Activated T-helper 1 cell treated with anti-CD3 and anti-CD28 coated beads, Interleukin-12 subunit alpha, Interleukin-12 subunit beta, Interleukin-2, Interleukin-4 antibody, amounts not matched to agents 30 ng/mL and 10 ng/mL and 1 ng/mL, durations not matched to agents 14 hours and 24 hours and 36 hours (primary cell): ENCODE measurements at regions of chr1 and their contacts with region 1.

Region 1: GRCh38 chr1:34597877-34598514 is 156.9 kb upstream of the GJB5 start:
- DNase-seq: peak; percentile 21
- H3K4me3 Mint-ChIP-seq: no peak overlapping the region
- H3K27ac Mint-ChIP-seq: no peak overlapping the region
- H3K4me1 Mint-ChIP-seq: no peaks in the 10 kb centered on the region
- H3K27me3 Mint-ChIP-seq: peaks cover 2% of the 10 kb centered on the region

Region 2: DNA sequence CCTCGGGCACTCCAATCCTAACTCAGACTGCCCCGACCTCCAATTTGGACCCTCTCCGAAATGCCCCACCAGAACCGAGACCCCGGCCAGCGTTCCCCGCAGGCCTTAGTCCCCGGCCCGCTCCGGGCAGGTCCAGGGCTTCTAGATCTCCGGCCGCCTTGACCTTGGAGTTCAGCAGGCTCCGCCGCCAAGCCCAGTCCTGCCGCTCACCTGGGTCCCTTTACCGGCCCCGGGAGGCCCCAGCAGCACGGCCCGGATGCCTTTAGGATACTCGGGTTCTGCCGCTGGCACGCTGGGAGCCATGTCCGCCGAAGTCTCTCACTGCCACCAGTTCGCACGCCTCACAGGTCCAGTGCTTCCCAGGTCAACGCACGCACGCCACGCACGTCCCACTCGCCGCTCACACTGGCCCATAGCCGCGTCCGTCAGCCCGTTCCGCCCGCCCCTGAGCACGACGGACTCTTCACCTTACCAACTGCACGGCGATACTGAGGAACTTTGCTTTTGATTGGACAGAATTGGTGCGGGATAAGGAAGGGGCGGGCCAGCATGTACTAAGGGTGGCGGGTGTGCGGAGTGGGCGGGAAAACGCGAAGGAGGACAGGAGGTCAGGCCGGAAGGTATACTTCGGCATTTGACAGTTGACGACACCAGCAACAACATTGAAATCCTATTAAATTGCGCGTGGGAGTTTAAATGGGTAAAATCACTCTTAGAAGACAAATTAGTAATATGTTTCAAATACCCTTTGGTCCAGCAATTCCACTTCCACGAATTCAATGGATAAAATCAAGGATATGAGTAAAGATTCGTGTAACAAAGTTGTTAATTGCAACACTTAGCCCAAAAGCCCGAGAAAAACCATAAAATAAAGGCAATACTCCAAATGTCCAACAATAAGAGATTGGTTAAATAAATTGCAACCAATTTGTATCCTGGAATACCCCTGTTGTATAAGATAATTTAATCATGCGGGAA is 1561.2 kb before region 1 on chr1 and contains the start of gene AK2:
- intact Hi-C with region 1: no loop called
- DNase-seq: peak; percentile 91
- H3K4me3 Mint-ChIP-seq: peak within 1 kb of the TSS; percentile 91
- H3K27ac Mint-ChIP-seq: peak within 1 kb of the TSS; percentile 90
- H3K4me1 Mint-ChIP-seq: peaks cover 48% of the 10 kb centered on the region
- H3K27me3 Mint-ChIP-seq: no peaks in the 10 kb centered on the region
- total RNA-seq, gene AK2: 387 and 400 TPM in 2 replicates

Region 3: GRCh38 chr1:34460193-34460592 is 137.8 kb before region 1 on chr1:
- intact Hi-C with region 1: loop called (anchors 1 kb)
- DNase-seq: peak; percentile 2
- H3K4me3 Mint-ChIP-seq: no peak overlapping the region
- H3K27ac Mint-ChIP-seq: no peak overlapping the region
- H3K4me1 Mint-ChIP-seq: no peaks in the 10 kb centered on the region
- H3K27me3 Mint-ChIP-seq: no peaks in the 10 kb centered on the region